ENCODE measurements at regions of chr12 and their contacts with region 1.

Region 1: GRCh38 chr12:102095675-102096263 is 24.1 kb downstream of the NUP37 start:
- DNase-seq: peak; percentile 42
- H3K4me3 ChIP-seq: no peak overlapping the region
- H3K27ac ChIP-seq: no peak overlapping the region
- H3K4me1 ChIP-seq: no peaks in the 10 kb centered on the region
- CTCF ChIP-seq: peak; percentile 85

Region 2: GRCh38 chr12:101343893-101344292 is 751.9 kb before region 1 on chr12:
- CTCF ChIA-PET with region 1: no interaction called
- POLR2A ChIA-PET with region 1: no interaction called
- intact Hi-C with region 1: no loop called
- DNase-seq: no peak
- H3K4me3 ChIP-seq: no peak overlapping the region
- H3K27ac ChIP-seq: no peak overlapping the region
- H3K4me1 ChIP-seq: peaks cover 30% of the 10 kb centered on the region
- CTCF ChIP-seq: no peak

Region 3: GRCh38 chr12:101862245-101862644 is 233.5 kb before region 1 on chr12:
- CTCF ChIA-PET with region 1: no interaction called
- POLR2A ChIA-PET with region 1: no interaction called
- intact Hi-C with region 1: no loop called
- DNase-seq: no peak
- H3K4me3 ChIP-seq: no peak overlapping the region
- H3K27ac ChIP-seq: no peak overlapping the region
- H3K4me1 ChIP-seq: peaks cover 3% of the 10 kb centered on the region
- CTCF ChIP-seq: no peak

Region 4: GRCh38 chr12:102215992-102216691 is 120.4 kb after region 1 on chr12:
- CTCF ChIA-PET with region 1: no interaction called
- POLR2A ChIA-PET with region 1: no interaction called
- intact Hi-C with region 1: no loop called
- DNase-seq: no peak
- H3K4me3 ChIP-seq: no peak overlapping the region
- H3K27ac ChIP-seq: no peak overlapping the region
- H3K4me1 ChIP-seq: no peaks in the 10 kb centered on the region
- CTCF ChIP-seq: no peak

Region 5: DNA sequence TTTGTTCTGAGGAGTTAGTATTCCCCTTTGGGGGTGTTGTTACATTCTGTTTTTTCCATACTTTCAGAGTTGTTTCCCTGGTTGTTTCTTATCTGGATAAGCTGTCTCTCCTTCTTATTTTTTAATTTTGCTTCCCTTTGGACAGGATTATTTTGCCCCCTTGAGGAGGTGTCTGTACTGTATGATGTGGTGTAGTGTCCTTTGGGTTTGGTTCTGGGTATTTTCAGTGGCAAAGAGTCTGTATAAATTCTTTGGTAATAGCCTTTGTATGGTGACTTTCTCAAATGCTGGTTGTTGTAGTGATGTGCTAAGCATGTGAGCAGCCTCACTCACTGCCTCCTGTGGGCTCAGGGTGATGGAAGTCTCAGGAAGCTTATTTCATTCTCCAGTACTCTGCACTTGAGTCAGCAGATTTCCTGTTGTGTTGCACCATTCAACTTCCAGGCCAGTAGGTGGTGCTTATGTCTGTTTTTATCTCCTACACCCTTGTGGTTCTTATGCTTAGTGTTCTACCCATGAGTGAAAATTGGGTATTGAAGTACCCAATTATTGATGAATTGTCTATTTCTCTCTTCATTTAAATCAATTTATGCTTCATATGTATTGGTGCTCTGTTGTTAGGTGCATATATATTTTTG is 205.2 kb after region 1 on chr12:
- CTCF ChIA-PET with region 1: no interaction called
- POLR2A ChIA-PET with region 1: no interaction called
- intact Hi-C with region 1: loop called (anchors 10 kb)
- DNase-seq: peak; percentile 35
- H3K4me3 ChIP-seq: no peak overlapping the region
- H3K27ac ChIP-seq: no peak overlapping the region
- H3K4me1 ChIP-seq: no peaks in the 10 kb centered on the region
- CTCF ChIP-seq: peak; percentile 73

Region 6: DNA sequence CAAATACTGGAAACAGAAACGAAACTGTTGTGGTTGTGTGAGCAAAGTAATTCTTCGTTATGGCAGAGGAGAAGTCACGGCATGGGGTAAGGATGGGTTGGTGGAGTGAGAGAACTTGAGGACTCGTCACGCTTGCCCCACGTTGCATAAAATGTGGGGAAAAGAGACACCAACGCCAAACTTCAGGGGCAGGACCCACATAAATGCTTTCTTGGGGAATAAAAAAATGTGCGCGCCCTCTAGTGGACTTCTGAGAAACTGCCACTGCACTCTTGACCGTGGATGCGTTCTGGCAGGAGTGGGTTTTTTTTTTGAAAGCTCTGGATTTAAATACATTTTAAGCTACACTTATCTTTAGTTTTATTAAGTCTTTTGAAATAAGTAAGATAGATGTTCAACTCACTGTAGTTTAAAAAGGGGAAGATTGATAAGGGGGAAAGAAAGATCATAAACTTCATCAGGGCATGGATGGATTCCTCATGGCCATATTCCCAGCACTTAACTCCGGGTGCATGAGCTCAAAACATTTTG is 388.7 kb after region 1 on chr12:
- CTCF ChIA-PET with region 1: no interaction called
- POLR2A ChIA-PET with region 1: no interaction called
- intact Hi-C with region 1: loop called (anchors 2 kb)
- DNase-seq: peak; percentile 59
- H3K4me3 ChIP-seq: no peak overlapping the region
- H3K27ac ChIP-seq: no peak overlapping the region
- H3K4me1 ChIP-seq: peaks cover 12% of the 10 kb centered on the region
- CTCF ChIP-seq: peak; percentile 96

Region 7: DNA sequence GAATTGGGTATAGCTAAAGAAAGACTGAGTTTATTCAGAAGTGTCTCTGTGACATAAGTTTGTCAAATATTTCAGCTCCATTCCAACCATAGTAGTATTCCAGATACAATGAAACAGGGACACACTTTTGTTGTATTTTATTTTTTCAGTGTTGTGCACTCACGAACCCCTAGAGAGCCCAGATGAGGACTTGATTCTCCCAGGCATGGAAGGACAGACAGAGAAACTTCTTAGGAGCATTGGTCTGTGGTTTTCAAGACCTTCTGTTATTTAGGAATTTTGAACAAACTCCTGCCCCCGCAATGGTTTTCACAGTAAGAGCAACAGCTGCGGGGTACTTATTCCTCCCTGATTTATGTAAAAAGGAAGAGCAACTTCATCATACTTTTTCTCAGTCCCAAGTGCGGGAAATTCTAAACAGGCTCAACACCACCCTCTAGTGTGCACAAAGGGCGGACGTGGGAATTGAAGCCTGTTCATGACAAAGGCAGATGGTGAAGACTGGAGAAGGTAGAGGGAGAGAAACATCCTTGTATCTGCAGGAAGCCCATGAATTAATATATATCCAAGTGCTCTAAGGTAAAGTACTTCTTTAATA is 673.6 kb after region 1 on chr12:
- CTCF ChIA-PET with region 1: no interaction called
- POLR2A ChIA-PET with region 1: no interaction called
- intact Hi-C with region 1: loop called (anchors 5 kb)
- DNase-seq: peak; percentile 48
- H3K4me3 ChIP-seq: no peak overlapping the region
- H3K27ac ChIP-seq: no peak overlapping the region
- H3K4me1 ChIP-seq: no peaks in the 10 kb centered on the region
- CTCF ChIP-seq: peak; percentile 81

Measured in OCI-LY7 (cell line).